PC-9 (cell line): ENCODE measurements at regions of chr2 and their contacts with region 1.

Region 1: GRCh38 chr2:29233445-29233844 is 118.2 kb downstream of the CLIP4 start:
- DNase-seq: peak; percentile 74 to 91
- H3K4me3 ChIP-seq: peak overlapping the region; percentile 4; the same call in 1 of the 2 replicates
- H3K27ac ChIP-seq: no peak overlapping the region
- H3K4me1 ChIP-seq: peaks cover 16% of the 10 kb centered on the region
- H3K27me3 ChIP-seq: peaks cover 42% of the 10 kb centered on the region
- CTCF ChIP-seq: no peak

Region 2: GRCh38 chr2:29260151-29260772 is 26.8 kb after region 1 on chr2:
- CTCF ChIA-PET with region 1: no interaction called
- POLR2A ChIA-PET with region 1: no interaction called
- intact Hi-C with region 1: loop called (anchors 2 kb)
- DNase-seq: peak; percentile 16 to 40
- H3K4me3 ChIP-seq: no peak overlapping the region
- H3K27ac ChIP-seq: no peak overlapping the region
- H3K4me1 ChIP-seq: peaks cover 15% of the 10 kb centered on the region
- H3K27me3 ChIP-seq: 0 out of 2 replicates have a peak, but pooled peaks cover 10% of the 10 kb centered on the region
- CTCF ChIP-seq: no peak

Region 3: DNA sequence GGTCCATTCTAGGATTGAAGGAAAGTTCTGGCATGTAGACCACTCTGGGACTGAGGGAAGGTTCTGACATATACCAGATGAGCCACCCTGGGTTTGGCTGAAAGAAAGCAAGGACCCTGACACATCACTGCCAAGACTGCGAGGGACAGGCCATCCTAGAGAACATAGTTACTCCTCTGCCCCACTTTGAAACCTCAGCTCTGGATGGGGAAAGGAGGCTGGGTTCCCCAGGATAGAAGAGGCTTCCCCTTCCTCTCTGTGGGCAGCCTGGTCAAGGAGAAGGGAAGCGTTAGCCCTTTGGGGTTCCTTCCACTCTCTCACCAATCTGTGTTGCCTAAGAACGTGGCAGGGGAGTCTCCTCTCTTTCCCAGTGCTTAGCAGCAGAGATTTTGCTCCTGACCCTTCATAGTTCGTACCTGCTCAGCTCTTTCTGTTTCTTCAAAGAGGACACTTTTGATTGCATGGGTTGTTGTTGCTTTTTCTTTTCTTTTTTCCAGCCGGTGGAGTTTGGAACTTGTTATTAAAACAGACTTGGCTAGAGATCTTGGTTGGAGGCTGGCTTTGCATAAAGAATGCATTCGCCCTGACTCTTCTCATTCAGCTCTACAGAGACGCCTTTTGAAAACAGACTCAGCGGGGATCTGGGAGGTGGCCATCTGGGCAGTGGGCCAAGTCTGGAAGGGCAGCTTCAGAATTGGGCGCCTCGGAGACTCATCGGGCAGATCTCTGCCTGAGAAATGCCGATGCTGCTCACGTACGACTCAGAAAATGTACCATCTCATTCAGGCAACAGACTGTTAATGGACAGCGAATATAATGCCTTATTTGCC is 47.9 kb after region 1 on chr2:
- CTCF ChIA-PET with region 1: no interaction called
- POLR2A ChIA-PET with region 1: no interaction called
- intact Hi-C with region 1: loop called (anchors 1 kb)
- DNase-seq: peak; percentile 65 to 79
- H3K4me3 ChIP-seq: no peak overlapping the region
- H3K27ac ChIP-seq: no peak overlapping the region
- H3K4me1 ChIP-seq: no peaks in the 10 kb centered on the region
- H3K27me3 ChIP-seq: peaks cover 96% of the 10 kb centered on the region
- CTCF ChIP-seq: no peak